ENCODE measurements at regions of chr1 and their contacts with region 1.

Region 1: DNA sequence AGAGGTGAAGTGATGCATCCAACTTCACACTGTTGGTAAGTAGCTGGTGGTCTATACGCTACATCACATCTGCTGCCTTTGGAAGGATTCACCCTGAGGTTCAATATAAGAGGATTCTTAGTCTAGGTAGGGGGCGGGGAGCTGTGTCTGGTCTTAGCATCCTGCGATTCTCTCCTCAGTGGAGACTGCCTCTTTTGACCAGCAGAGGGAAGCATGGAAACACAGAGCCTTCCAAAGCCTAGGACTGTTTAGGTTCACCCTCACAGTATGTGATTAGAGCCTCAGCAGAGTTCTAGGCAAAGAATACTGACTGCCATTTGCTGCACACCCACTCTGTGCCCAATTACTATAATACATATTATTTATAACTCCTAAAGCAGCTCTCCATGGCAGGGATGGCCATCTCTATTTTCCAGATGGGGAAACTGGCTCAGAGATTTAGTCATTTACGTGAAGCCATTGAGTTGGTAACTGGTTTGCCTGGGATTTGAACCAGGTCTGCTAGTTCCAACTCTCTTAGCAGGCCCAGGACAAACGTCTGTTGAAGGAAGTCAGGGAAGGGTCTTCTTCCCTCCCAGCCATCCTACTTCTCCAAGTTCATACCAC is 28.9 kb upstream of the EFCAB14 start:
- DNase-seq: no peak
- ATAC-seq: peak; percentile 76

Region 2: GRCh38 chr1:46806271-46807020 is 58.7 kb after region 1 on chr1:
- intact Hi-C with region 1: loop called (anchors 5 kb)
- DNase-seq: peak; percentile 80
- ATAC-seq: peak; percentile 91

Region 3: GRCh38 chr1:46910790-46911189 is 163.0 kb after region 1 on chr1:
- intact Hi-C with region 1: no loop called
- DNase-seq: no peak
- ATAC-seq: no peak

Region 4: GRCh38 chr1:46991083-46991923 is 243.5 kb after region 1 on chr1:
- intact Hi-C with region 1: loop called (anchors 2 kb)
- DNase-seq: no peak
- ATAC-seq: no peak

Region 5: DNA sequence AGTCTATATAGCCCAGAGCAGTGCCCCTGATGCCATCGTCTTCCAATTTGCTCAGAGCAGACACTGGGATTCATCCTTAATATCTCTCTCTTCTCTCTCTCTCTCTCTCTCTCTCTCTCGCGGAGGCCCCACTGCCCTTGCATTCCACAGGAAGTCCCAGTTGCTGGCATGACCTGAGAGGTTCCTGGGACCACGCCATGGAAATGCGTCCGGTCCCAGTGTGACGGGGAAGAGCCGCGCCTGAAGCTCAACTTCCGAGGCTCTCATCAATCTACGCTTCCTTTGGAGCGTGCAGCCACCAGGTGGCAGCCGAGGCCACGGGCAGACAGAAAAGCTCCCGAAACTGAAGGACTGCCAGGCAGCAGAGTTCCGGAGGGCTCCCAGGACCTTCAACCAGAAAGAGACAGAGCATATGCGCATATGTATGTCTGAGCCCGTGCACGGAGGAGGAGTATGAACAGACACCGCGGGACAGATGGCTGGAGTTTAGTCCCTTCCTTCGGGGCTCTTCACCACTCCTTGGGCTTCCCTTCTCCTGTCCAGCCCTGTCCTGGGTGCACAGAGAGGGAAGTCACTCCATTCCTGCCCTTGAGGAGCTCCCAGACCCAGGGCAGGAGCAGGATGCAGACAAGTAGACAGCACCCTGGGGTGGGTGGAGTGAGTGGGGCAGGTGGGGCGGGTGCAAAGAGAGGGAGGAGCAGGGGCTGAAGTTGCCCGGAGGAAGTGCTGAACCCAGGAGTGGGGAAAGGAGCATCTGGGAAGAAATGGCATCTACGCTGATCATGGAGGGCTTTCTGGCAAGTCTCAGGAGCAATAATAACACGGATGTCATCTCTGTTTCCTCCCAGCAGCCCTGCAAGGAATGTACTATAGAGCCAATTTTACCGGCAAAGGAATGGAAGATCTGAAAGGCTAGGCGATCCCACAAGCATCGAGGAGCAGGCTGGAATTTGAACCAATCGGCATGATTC is 431.5 kb after region 1 on chr1:
- intact Hi-C with region 1: loop called (anchors 5 kb)
- DNase-seq: peak; percentile 92
- ATAC-seq: peak; percentile 89